MCF 10A (cell line): ENCODE measurements at regions of chr1 and their contacts with region 1.

Region 1: GRCh38 chr1:175319418-175320230 is 127.0 kb upstream of the KIAA0040 start:
- DNase-seq: peak; percentile 85
- H3K4me3 Mint-ChIP-seq: no peak overlapping the region
- H3K27ac Mint-ChIP-seq: no peak overlapping the region
- H3K4me1 Mint-ChIP-seq: peaks cover 5% of the 10 kb centered on the region
- H3K27me3 Mint-ChIP-seq: no peaks in the 10 kb centered on the region
- CTCF ChIP-seq: peak; percentile 94

Region 2: DNA sequence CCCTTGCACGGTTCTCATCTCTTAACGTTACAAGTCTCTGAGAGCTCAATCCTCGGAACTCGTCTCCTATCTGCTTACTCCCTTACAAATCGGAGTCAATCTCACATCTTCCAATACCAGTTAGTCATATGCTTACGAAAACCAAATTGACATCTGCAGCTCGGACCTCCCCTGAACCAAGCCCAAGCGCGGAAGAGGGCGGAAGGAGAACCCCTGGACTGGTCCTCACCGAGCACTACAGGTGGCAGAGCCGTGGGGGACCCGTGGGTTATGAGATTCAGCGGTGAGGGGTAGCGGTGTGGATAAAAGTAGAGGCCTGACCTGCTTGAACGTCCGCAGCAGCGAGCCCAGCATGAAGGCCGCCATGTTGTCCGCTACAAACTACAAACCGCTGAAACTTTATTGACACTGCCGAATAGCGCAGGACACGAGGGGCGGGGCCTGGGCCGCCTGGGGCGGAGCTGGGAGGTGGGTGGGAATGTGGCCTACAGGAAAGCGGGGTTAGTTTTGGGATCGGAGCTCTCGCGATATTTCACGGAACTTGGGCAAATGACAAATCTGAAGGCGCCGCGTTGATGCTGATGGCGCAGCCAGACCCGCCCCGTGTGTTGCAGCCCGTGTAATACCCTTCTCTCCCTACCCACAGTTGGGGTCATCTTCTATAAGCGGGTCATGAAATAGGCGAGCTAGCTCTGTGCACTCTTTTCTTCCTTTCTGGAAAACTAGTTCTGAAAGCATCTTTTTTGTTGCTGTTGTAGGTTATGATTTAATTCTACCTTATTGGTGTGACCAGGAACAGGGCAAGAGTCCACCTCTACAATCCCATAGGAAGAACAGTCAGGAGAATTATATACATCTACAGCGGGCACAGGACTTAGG is 296.3 kb before region 1 on chr1 and contains the start of gene MRPS14:
- CTCF ChIA-PET with region 1: interaction called, 34 read pairs
- POLR2A ChIA-PET with region 1: no interaction called
- intact Hi-C with region 1: no loop called
- DNase-seq: peak; percentile 99
- H3K4me3 Mint-ChIP-seq: peak within 1 kb of the TSS; percentile 87
- H3K27ac Mint-ChIP-seq: peak within 1 kb of the TSS; percentile 77
- H3K4me1 Mint-ChIP-seq: peaks cover 20% of the 10 kb centered on the region
- H3K27me3 Mint-ChIP-seq: no peaks in the 10 kb centered on the region
- CTCF ChIP-seq: no peak
- total RNA-seq, gene MRPS14: 36.3 and 40.6 TPM in 2 replicates

Region 3: DNA sequence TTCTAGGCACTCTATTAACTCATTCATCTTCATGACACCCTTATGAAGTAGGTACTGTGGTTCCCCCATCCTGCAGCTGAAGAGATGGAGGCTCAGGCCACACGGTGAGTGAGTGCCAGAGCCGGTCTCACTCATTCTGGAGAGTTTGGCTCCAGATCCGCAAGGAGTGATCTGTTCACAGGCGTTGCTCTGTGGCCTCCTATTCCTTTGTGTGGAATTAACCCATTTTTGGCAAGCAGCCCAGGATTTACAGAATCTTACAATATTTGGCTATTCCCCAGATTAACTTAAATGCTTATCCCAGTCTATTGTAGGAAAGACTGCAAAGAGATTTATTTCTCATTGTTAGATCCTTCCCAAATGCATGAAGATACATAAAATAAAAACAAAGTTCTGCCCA is 156.7 kb before region 1 on chr1:
- CTCF ChIA-PET with region 1: interaction called, 380 read pairs
- POLR2A ChIA-PET with region 1: no interaction called
- intact Hi-C with region 1: no loop called
- DNase-seq: peak; percentile 40
- H3K4me3 Mint-ChIP-seq: no peak overlapping the region
- H3K27ac Mint-ChIP-seq: no peak overlapping the region
- H3K4me1 Mint-ChIP-seq: peaks cover 6% of the 10 kb centered on the region
- H3K27me3 Mint-ChIP-seq: no peaks in the 10 kb centered on the region
- CTCF ChIP-seq: no peak

Region 4: GRCh38 chr1:175186433-175187142 is 133.0 kb before region 1 on chr1:
- CTCF ChIA-PET with region 1: interaction called, 34 read pairs
- POLR2A ChIA-PET with region 1: no interaction called
- intact Hi-C with region 1: no loop called
- DNase-seq: no peak
- H3K4me3 Mint-ChIP-seq: no peak overlapping the region
- H3K27ac Mint-ChIP-seq: no peak overlapping the region
- H3K4me1 Mint-ChIP-seq: peaks cover 26% of the 10 kb centered on the region
- H3K27me3 Mint-ChIP-seq: no peaks in the 10 kb centered on the region
- CTCF ChIP-seq: no peak

Region 5: DNA sequence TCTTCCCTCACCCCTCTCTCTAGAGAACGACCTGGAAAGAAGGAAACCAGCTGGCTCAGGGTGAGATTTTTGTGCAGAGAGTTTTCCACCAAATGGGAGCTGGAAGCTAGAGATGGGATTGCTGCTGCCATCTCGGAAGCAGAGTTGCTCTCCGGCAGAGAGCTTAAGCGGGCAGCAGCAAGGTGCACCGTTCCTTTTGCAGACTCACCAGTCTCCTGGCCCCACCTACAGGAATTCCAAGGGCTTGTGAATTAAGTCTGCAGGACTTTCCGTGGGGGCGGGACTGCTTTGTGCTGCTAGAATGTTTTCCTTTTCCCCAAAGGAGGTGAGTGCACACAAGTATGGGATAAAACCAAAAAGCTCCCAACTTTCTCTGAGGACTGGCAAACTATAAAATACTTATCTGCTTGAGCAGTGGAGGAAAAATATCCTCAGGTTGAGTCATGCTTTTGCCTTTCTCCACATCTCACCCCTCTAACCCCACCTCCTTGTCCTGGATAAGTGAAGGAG is 97.9 kb before region 1 on chr1:
- CTCF ChIA-PET with region 1: interaction called, 72 read pairs
- POLR2A ChIA-PET with region 1: interaction called, 3 read pairs
- intact Hi-C with region 1: loop called (anchors 1 kb)
- DNase-seq: peak; percentile 91
- H3K4me3 Mint-ChIP-seq: no peak overlapping the region
- H3K27ac Mint-ChIP-seq: no peak overlapping the region
- H3K4me1 Mint-ChIP-seq: peaks cover 27% of the 10 kb centered on the region
- H3K27me3 Mint-ChIP-seq: no peaks in the 10 kb centered on the region
- CTCF ChIP-seq: peak; percentile 45

Region 6: GRCh38 chr1:175297291-175297690 is 22.3 kb before region 1 on chr1:
- CTCF ChIA-PET with region 1: interaction called, 10 read pairs
- POLR2A ChIA-PET with region 1: no interaction called
- intact Hi-C with region 1: no loop called
- DNase-seq: no peak
- H3K4me3 Mint-ChIP-seq: no peak overlapping the region
- H3K27ac Mint-ChIP-seq: no peak overlapping the region
- H3K4me1 Mint-ChIP-seq: no peaks in the 10 kb centered on the region
- H3K27me3 Mint-ChIP-seq: no peaks in the 10 kb centered on the region
- CTCF ChIP-seq: no peak

Region 7: GRCh38 chr1:175338387-175339135 is 18.9 kb after region 1 on chr1:
- CTCF ChIA-PET with region 1: interaction called, 54 read pairs
- POLR2A ChIA-PET with region 1: no interaction called
- intact Hi-C with region 1: no loop called
- DNase-seq: peak; percentile 48
- H3K4me3 Mint-ChIP-seq: no peak overlapping the region
- H3K27ac Mint-ChIP-seq: no peak overlapping the region
- H3K4me1 Mint-ChIP-seq: no peaks in the 10 kb centered on the region
- H3K27me3 Mint-ChIP-seq: peaks cover 52% of the 10 kb centered on the region
- CTCF ChIP-seq: peak; percentile 56